ENCODE measurements at regions of chrX and their contacts with region 1.

Region 1: DNA sequence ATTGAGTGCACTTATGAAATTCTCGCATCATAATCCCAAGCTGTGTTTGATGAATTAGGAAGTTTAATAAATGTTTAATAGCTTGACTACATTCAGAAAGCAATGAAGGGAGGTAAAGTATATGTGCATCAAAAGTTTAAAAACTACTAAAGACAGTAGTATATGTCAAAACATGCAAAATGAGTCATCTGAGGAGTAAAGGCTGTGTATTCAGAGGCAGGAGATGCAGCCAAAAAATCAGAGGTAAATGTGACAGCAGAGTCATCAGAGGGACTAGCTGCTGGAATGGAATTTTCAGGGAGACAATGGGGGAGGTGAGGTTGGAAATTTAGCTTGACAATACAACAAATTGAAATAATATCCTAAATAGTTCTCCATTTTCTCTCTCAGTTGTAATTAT is 127.0 kb upstream of the FUNDC1 start:
- DNase-seq: no peak
- H3K4me3 ChIP-seq: no peak overlapping the region
- H3K27ac ChIP-seq: no peak overlapping the region
- H3K4me1 ChIP-seq: no peaks in the 10 kb centered on the region
- H3K27me3 ChIP-seq: peaks cover 0 to 44% of the 10 kb centered on the region in 2 donors
- CTCF ChIP-seq: no peak
- POLR2A ChIP-seq: no peak

Region 2: DNA sequence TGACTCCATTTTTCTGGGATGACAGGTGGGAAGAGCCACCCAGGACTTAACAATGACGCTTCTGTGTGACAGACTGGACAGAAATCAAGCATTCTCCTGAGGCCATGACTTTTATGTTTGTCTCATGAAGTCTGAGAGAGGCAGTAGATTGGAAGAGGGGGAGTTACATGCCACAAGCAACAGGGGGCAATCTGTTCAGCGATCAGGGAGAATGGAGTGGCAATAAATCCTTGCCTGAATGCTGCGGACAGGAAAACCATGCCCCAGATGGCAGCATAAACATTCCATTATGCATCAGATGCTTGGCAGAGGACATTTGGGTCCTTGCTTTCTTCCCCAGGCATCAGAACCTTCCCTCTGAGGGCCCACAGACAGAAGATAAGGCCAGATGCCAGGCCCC is 843.4 kb after region 1 on chrX:
- intact Hi-C with region 1: loop called (anchors 5 kb)
- DNase-seq: no peak
- H3K4me3 ChIP-seq: no peak overlapping the region
- H3K27ac ChIP-seq: peak overlapping the region; percentile 22 to 38
- H3K4me1 ChIP-seq: peaks cover 0 to 4% of the 10 kb centered on the region in 2 donors
- H3K27me3 ChIP-seq: peaks cover 0 to 40% of the 10 kb centered on the region in 2 donors
- CTCF ChIP-seq: no peak
- POLR2A ChIP-seq: no peak

Measured in breast epithelium (tissue), 4 donors.